CD4-positive, alpha-beta T cell (primary cell): ENCODE measurements at regions of chr11 and their contacts with region 1.

Region 1: DNA sequence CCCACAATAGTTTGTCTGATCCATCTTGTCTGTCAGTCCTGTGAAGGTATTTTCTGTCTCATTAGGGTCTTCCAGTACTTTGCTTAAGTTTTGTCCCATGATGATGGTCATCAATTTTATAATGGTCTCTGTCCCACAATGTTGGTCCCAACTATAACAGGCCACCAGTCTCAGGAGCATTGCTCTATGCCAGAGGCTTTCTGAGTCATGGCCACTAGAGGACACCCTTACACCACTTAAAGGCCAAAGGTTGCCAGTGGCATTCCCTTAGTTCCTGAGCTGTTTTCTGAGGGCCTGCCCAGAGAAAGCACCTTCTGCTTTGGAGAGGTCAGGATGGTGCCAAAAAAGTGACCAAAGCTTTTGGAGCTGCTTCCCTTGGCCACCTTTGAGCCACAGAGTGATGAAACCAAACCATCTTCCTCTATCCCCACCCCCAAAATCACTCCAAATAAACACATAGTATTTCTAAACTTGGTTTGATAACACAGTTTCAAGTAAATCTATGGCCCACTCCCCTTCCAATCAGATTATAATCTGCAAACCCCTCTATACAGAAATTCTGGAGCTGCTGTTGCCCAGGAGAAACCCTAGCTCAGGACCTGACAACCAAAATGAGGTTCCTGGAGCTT is 19.3 kb downstream of the EIF3F start:
- DNase-seq: peak in 12 of 14 experiments; percentile 16 to 74 (median 35)
- ATAC-seq: peak; percentile 71
- H3K4me3 ChIP-seq: no peak overlapping the region
- H3K4me3 Mint-ChIP-seq: no peak overlapping the region
- H3K27ac ChIP-seq: no peak overlapping the region
- H3K27ac Mint-ChIP-seq: no peak overlapping the region
- H3K4me1 ChIP-seq: no peaks in the 10 kb centered on the region
- H3K4me1 Mint-ChIP-seq: no peaks in the 10 kb centered on the region
- H3K27me3 ChIP-seq: peaks cover 0 to 2% of the 10 kb centered on the region in 2 experiments
- H3K27me3 Mint-ChIP-seq: peaks cover 28% of the 10 kb centered on the region
- CTCF ChIP-seq: peak; percentile 72

Region 2: GRCh38 chr11:8033305-8034105 is 27.0 kb after region 1 on chr11:
- CTCF ChIA-PET with region 1: interaction called, 11 read pairs
- POLR2A ChIA-PET with region 1: no interaction called
- intact Hi-C with region 1: no loop called
- DNase-seq: peak; percentile 12 to 75 (median 32)
- ATAC-seq: peak; percentile 84
- H3K4me3 ChIP-seq: no peak overlapping the region
- H3K4me3 Mint-ChIP-seq: no peak overlapping the region
- H3K27ac ChIP-seq: no peak overlapping the region
- H3K27ac Mint-ChIP-seq: no peak overlapping the region
- H3K4me1 ChIP-seq: peaks cover 8% of the 10 kb centered on the region
- H3K4me1 Mint-ChIP-seq: peaks cover 7% of the 10 kb centered on the region
- H3K27me3 ChIP-seq: peaks cover 5 to 6% of the 10 kb centered on the region in 2 experiments
- H3K27me3 Mint-ChIP-seq: peaks cover 51% of the 10 kb centered on the region
- CTCF ChIP-seq: peak; percentile 79

Region 3: GRCh38 chr11:8090756-8091155 is 84.3 kb after region 1 on chr11:
- CTCF ChIA-PET with region 1: interaction called, 4 read pairs
- POLR2A ChIA-PET with region 1: no interaction called
- intact Hi-C with region 1: loop called in 1 of 2 experiments (anchors 2 kb)
- DNase-seq: peak in 3 of 14 experiments; percentile 17 to 30 (median 27)
- ATAC-seq: no peak
- H3K4me3 ChIP-seq: no peak overlapping the region
- H3K4me3 Mint-ChIP-seq: no peak overlapping the region
- H3K27ac ChIP-seq: no peak overlapping the region
- H3K27ac Mint-ChIP-seq: no peak overlapping the region
- H3K4me1 ChIP-seq: no peaks in the 10 kb centered on the region
- H3K4me1 Mint-ChIP-seq: peaks cover 5% of the 10 kb centered on the region
- H3K27me3 ChIP-seq: no peaks in the 10 kb centered on the region
- H3K27me3 Mint-ChIP-seq: peaks cover 13% of the 10 kb centered on the region
- CTCF ChIP-seq: no peak

Region 4: DNA sequence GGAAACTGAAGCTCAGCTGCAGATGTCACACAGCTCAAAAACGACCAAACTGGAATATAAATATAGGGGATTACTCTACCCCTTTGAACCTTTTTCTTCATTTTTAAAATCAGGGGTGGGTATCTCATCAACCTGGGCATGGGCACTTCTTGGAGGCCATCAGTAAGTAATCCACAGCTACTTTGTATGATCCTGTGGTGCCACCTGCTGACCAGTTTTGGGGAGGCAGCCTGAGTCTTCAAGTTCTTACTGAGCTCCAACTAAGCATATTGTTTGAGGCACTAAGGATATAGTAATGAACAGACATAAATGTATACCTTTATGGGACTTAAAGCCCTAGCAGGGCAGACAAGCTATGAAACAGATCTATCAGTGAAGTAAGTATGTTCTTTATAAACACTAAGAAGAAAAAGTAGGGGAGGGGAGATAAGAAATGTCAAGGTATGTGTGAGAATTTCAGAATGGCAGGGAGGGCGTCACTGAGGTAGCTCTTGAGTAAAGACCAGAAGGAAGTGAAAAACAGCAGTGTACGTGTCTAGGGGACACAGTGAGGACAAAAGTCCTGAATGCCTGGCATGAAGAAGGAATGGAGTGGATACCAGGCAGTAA is 92.9 kb after region 1 on chr11:
- CTCF ChIA-PET with region 1: interaction called, 26 read pairs
- POLR2A ChIA-PET with region 1: interaction called, 7 read pairs
- intact Hi-C with region 1: loop called (anchors 1 kb)
- DNase-seq: peak; percentile 44 to 79 (median 68)
- ATAC-seq: peak; percentile 52
- H3K4me3 ChIP-seq: no peak overlapping the region
- H3K4me3 Mint-ChIP-seq: no peak overlapping the region
- H3K27ac ChIP-seq: no peak overlapping the region
- H3K27ac Mint-ChIP-seq: no peak overlapping the region
- H3K4me1 ChIP-seq: no peaks in the 10 kb centered on the region
- H3K4me1 Mint-ChIP-seq: no peaks in the 10 kb centered on the region
- H3K27me3 ChIP-seq: no peaks in the 10 kb centered on the region
- H3K27me3 Mint-ChIP-seq: no peaks in the 10 kb centered on the region
- CTCF ChIP-seq: peak; percentile 67

Region 5: GRCh38 chr11:8263769-8264410 is 257.4 kb after region 1 on chr11 and contains the start of gene LMO1:
- CTCF ChIA-PET with region 1: no interaction called
- POLR2A ChIA-PET with region 1: no interaction called
- intact Hi-C with region 1: loop called in 1 of 2 experiments (anchors 5 kb)
- DNase-seq: peak; percentile 54 to 79 (median 66)
- ATAC-seq: peak; percentile 77
- H3K4me3 ChIP-seq: peak within 1 kb of the TSS; percentile 24
- H3K4me3 Mint-ChIP-seq: peak within 1 kb of the TSS; percentile 84
- H3K27ac ChIP-seq: no peak within 1 kb of the TSS
- H3K27ac Mint-ChIP-seq: no peak within 1 kb of the TSS
- H3K4me1 ChIP-seq: peaks cover 27% of the 10 kb centered on the region
- H3K4me1 Mint-ChIP-seq: peaks cover 11% of the 10 kb centered on the region
- H3K27me3 ChIP-seq: peaks cover 60 to 78% of the 10 kb centered on the region in 2 experiments
- H3K27me3 Mint-ChIP-seq: peaks cover 81% of the 10 kb centered on the region
- CTCF ChIP-seq: peak; percentile 76
- total RNA-seq, gene LMO1: not detected

Region 6: GRCh38 chr11:8566613-8567210 is 560.2 kb after region 1 on chr11:
- CTCF ChIA-PET with region 1: no interaction called
- POLR2A ChIA-PET with region 1: no interaction called
- intact Hi-C with region 1: loop called (anchors 5 to 10 kb)
- DNase-seq: peak in 3 of 14 experiments; percentile 39 to 46 (median 46)
- ATAC-seq: no peak
- H3K4me3 ChIP-seq: no peak overlapping the region
- H3K4me3 Mint-ChIP-seq: no peak overlapping the region
- H3K27ac ChIP-seq: no peak overlapping the region
- H3K27ac Mint-ChIP-seq: no peak overlapping the region
- H3K4me1 ChIP-seq: no peaks in the 10 kb centered on the region
- H3K4me1 Mint-ChIP-seq: no peaks in the 10 kb centered on the region
- H3K27me3 ChIP-seq: peaks cover 1 to 9% of the 10 kb centered on the region in 2 experiments
- H3K27me3 Mint-ChIP-seq: peaks cover 56% of the 10 kb centered on the region
- CTCF ChIP-seq: peak; percentile 76